ENCODE measurements at regions of chr12 and their contacts with region 1.

Region 1: DNA sequence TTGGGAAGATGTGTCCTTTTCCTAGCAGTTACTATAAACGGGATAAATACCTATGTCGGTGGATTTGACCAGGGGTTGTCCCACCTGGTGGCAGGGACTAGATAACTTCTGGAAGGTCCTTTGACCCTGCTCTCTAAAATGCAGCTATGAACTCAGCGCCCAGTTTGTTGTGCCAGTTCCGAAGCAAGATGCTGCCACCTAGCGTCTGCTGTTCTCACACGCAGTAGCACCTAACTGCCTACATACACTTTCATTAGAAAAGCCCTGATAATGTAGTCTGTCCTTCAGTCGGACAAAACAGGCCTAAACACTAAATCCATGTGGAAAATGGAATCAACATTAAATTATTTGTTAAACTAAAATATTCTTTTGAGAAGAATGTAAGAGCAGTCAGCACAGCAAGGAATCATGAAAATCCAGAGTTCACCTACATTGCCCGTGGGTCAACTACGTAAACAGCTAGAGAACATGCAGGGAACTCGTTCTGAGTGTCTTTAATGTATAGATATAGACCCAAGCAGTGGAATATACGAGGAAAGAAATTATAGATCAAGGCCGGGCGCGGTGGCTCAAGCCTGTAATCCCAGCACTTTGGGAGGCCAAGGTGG is 51.1 kb upstream of the CRACR2A start:
- DNase-seq: peak in 2 of 3 donors; percentile 72 to 93
- ATAC-seq: peak; percentile 87
- H3K4me3 ChIP-seq: no peak overlapping the region
- H3K4me1 ChIP-seq: no peaks in the 10 kb centered on the region
- CTCF ChIP-seq: peak; percentile 59

Region 2: DNA sequence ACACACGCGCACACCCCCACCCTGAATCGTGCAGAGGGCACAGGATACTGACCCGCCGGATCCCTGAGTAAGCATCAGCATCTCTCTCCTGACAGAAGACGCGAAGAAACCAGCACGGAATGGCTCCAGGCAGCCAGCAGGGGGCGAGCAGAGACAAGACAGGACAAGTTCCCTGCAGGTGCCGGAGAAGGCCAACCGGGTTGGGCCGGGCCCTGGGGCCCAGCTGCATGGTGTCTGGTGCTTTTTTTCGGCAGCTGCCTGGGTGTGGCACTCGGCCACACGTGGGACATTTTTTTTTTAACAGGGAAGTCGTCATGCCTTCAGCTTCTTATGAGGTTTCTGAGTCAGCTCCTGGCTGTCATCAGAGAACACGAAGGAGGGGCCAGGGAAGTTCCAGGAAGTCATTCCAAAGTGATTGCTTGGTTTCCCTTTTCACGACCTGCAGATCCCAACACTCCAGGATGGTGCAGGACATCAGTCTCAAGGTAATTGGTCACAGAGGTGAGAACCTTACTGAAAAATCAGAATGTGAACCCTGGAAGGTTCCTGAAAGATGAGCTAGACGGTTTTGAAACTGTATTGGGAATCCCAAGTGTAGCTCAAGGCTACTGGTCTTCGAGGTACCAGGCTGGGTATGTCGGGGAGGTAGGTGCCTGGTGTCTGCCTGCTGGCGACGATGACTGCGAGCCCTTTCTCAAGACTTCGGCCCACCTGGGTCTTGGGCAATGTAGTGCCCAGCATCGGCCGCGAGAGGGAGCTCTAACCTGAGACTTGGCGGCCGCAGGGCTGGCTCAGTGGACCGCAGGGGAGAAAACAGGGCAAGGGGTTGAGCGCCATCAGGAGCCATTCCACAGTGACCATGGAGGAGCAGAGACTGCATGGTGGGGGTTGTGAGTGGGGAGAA is 503.8 kb before region 1 on chr12:
- intact Hi-C with region 1: loop called (anchors 10 kb)
- DNase-seq: peak; percentile 92
- ATAC-seq: peak; percentile 92
- H3K4me3 ChIP-seq: peak overlapping the region; percentile 2
- H3K4me1 ChIP-seq: no peaks in the 10 kb centered on the region
- CTCF ChIP-seq: peak; percentile 93

Region 3: DNA sequence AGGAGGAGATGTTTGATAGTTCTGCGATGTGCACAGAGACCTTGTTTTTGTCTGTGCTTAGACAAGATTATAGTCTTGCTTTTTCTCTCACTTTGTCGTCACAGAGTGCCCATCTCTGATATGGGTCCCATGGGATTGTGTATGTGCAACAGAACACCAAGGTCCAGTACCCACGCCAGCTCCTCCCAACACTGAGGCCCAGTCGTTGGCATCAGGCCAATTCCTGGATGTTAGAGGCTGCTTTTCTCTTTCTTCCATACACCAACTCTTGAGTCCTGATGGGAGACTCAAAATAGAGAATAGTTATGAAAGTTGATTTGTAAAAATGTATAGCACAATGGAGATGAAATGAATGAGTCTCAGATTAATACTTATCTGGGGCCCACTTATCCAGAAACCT is 335.6 kb before region 1 on chr12:
- intact Hi-C with region 1: no loop called
- DNase-seq: no peak
- ATAC-seq: no peak
- H3K4me3 ChIP-seq: no peak overlapping the region
- H3K4me1 ChIP-seq: no peaks in the 10 kb centered on the region
- CTCF ChIP-seq: no peak

Region 4: DNA sequence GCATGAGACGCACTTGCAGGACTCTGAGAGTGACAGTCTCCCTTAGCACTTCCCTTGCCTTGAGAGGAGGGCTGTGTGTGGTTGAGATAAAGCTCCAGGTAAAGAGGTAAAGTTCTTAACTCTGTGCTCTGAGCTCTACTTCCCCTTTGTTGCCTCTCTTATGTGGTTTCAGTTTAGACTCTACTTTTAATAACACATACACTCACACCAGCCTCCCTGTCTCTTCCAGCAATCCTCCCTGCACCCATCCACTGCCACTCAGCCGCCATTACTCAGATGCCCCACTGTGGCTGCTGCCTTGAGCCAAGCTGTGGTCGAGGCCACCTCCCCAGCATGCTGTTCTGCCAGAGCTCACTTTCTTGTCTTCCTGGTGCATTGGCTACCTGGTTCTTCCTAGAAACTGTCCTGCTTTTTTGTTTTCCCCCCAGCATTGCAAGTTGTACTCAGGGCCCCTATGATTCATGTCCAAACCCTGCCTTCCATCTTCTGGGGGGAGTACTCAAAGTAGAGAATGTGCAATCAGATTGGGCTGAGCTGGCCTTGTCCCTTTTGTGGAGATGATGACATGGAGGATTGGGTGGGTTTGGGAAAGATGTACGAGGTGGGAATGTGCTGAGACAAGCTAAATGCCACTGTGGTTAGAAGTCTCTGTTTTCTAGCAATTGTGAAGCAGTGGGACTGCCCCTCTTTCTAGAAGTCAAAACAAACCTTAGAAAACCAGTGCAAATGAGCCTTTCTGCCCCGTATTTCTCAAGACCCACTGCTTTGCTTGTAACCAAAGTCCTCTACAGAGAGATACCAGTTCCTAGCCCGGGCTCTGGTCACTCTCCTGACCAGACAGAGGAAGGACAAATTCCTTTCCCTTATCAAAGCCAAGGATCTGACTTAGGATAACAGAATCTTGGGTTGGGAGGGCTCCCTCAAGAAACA is 184.8 kb after region 1 on chr12:
- intact Hi-C with region 1: no loop called
- DNase-seq: no peak
- ATAC-seq: peak; percentile 60
- H3K4me3 ChIP-seq: no peak overlapping the region
- H3K4me1 ChIP-seq: no peaks in the 10 kb centered on the region
- CTCF ChIP-seq: no peak

Region 5: DNA sequence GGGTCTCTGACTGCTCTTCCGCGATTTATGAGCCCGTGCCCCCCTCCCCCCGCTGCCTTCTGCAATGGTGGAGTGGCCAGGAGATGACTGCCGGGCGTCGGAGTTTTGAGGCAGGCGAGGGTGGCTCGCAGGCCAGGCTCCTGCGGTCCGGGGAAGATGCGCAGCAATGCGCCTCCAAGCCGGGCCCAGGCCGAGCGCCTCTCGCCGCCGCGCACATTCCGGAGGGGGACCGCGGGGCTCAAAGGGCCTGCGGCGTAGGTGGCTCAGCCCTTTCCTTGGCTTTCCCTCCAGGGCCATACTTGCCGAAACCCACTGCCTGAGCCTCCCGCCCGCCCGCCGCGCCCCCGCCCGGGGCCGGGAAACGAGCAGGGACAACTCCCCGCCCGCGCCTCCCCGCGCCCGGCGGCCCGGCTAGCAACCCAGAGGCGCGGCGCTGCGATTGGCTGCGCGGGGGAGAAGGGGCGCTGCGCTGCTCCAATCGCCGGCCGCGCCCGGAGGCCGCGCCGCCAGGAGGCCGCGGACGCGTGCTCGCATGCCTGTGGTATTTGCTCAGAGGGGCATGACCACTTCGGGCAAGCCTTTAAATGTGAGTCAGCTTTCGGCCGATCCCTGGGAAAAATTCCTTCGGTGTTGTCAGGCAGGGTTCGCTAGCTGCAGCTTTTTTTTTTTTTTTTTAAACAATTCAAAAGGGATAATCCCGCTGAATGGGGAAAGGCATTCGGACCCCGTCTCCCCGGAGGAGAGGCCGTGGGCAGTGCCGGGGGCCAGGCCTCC is 227.1 kb after region 1 on chr12:
- intact Hi-C with region 1: no loop called
- DNase-seq: peak; percentile 86 to 91 (median 90)
- ATAC-seq: peak; percentile 97
- H3K4me3 ChIP-seq: peak overlapping the region; percentile 3
- H3K4me1 ChIP-seq: peaks cover 12% of the 10 kb centered on the region
- CTCF ChIP-seq: no peak